ENCODE measurements at regions of chr2 and their contacts with region 1.

Region 1: GRCh38 chr2:172102391-172103278 is at the start of gene DLX2:
- DNase-seq: peak; percentile 75 to 90 (median 84)
- ATAC-seq: peak; percentile 64 to 75
- H3K4me3 ChIP-seq: peak within 1 kb of the TSS; percentile 53
- H3K27ac ChIP-seq: no peak within 1 kb of the TSS
- H3K4me1 ChIP-seq: peaks cover 12% of the 10 kb centered on the region
- H3K27me3 ChIP-seq: no peaks in the 10 kb centered on the region
- total RNA-seq, gene DLX2: not detected

Region 2: DNA sequence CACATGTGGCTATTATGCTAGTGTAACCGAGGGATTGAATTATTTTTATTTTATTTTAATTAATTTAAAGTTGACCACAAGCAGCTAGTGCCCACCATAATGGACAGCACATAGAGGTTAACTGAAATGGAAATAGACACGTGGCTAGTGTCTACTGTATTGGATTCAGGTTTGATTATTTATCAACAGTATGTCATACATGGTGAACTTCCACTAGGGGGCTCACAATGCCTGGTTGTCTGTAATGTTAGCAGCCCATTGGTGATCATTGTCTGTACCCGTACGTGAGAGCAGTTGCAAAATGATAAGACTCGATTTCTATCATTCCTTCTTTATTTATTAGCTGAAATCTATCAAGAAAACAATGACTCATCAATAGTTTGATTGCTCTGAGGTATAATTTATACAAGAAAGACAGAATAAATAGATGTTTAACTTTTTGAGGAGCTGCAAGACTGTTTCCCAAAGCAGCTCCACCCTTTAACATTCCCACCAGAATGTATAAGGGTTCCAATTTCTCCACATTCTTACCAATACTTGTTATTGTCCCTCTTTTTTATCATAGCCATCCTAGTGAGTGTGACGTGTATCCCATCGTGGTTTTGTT is 503.8 kb before region 1 on chr2:
- intact Hi-C with region 1: loop called in 1 of 4 experiments (anchors 10 kb)
- DNase-seq: peak in 1 of 3 donors; percentile 19
- ATAC-seq: peak; percentile 80 to 87
- H3K4me3 ChIP-seq: no peak overlapping the region
- H3K27ac ChIP-seq: no peak overlapping the region
- H3K4me1 ChIP-seq: no peaks in the 10 kb centered on the region
- H3K27me3 ChIP-seq: no peaks in the 10 kb centered on the region

Region 3: DNA sequence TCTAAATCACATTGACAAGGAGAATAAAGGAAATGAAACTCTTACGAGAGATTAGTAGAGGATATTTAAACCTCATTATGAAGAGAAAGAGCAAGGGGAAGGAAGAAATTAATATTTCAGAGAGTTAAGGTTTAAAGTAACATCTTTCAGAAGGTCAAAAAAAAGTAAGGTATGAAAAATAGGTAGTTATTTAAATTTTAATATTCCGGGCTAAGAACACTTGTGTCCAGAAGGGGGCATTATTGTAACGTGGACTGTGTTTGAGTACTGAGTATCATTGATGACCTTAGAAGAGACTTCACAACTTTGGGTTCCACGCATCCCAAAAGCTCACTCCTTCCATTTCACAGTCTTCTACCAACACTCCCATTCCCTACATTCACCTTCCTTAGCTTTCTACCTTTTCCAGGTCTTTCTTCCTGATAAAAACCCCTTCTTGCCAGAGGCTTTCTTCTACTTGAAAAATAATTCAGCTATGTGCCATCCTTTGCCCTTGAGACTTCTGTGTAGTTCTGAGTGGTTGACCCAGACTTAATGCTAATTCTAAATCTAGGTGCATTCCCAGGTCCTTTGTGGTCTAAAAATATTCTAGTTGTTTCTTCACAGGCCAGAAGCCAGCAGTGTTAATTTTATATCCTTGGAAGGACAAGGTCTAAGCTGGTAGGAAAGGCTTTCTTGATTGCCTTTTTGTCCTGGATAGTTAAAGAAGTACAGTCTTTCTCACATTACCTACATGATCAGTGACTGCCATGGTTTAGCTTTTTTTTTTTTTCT is 398.9 kb before region 1 on chr2:
- intact Hi-C with region 1: loop called in 3 of 4 experiments (anchors 10 kb)
- DNase-seq: no peak
- ATAC-seq: peak in 1 of 2 donors; percentile 40
- H3K4me3 ChIP-seq: no peak overlapping the region
- H3K27ac ChIP-seq: no peak overlapping the region
- H3K4me1 ChIP-seq: no peaks in the 10 kb centered on the region
- H3K27me3 ChIP-seq: no peaks in the 10 kb centered on the region

Region 4: GRCh38 chr2:171811245-171811628 is 291.4 kb before region 1 on chr2:
- intact Hi-C with region 1: loop called in 1 of 4 experiments (anchors 5 kb)
- DNase-seq: no peak
- ATAC-seq: no peak
- H3K4me3 ChIP-seq: no peak overlapping the region
- H3K27ac ChIP-seq: no peak overlapping the region
- H3K4me1 ChIP-seq: no peaks in the 10 kb centered on the region
- H3K27me3 ChIP-seq: no peaks in the 10 kb centered on the region

Region 5: GRCh38 chr2:171966268-171966667 is 136.4 kb before region 1 on chr2:
- intact Hi-C with region 1: no loop called
- DNase-seq: no peak
- ATAC-seq: no peak
- H3K4me3 ChIP-seq: no peak overlapping the region
- H3K27ac ChIP-seq: no peak overlapping the region
- H3K4me1 ChIP-seq: no peaks in the 10 kb centered on the region
- H3K27me3 ChIP-seq: no peaks in the 10 kb centered on the region